PC-3 (cell line): ENCODE measurements at regions of chr10 and their contacts with region 1.

Region 1: DNA sequence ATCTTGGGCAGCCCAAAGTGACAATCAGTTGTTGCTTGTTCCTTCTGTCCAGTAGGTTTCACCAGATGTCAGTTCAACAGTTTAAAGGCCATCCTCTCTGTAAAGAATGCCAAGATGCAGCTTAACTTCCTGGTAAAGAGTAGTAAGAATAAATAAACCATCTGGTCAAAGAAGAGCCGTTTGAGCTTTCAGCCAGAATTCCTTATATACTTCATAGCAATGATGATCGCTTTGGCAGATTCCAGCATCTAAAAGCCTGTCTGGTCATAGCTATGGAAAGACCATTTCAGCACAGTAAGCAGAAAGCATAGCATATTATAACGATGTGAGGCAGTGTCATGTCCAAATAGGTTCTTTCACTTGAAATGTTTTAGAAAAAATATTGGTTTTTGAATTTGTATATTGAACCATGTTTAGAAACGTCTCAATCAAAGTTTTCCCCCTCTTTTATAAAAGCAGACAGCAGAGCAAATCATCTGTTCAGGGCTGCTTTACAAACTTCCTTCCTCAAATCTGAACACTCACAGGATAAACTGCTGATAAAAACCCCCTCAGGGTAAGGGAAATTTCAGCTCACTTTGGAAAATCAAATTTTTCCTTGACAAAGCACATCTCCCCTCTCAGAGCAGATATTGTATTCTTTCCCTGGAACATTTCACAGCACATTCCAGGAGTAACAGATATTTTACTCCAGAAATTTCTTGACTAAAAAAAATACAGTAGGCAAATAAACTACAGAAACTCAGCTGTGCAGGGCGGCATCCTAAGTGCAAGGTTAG is 184.1 kb downstream of the NOC3L start:
- DNase-seq: no peak
- ATAC-seq: no peak
- H3K4me3 ChIP-seq: no peak overlapping the region
- H3K27ac ChIP-seq: no peak overlapping the region
- H3K4me1 ChIP-seq: peaks cover 11% of the 10 kb centered on the region
- H3K27me3 ChIP-seq: no peaks in the 10 kb centered on the region
- CTCF ChIP-seq: no peak

Region 2: DNA sequence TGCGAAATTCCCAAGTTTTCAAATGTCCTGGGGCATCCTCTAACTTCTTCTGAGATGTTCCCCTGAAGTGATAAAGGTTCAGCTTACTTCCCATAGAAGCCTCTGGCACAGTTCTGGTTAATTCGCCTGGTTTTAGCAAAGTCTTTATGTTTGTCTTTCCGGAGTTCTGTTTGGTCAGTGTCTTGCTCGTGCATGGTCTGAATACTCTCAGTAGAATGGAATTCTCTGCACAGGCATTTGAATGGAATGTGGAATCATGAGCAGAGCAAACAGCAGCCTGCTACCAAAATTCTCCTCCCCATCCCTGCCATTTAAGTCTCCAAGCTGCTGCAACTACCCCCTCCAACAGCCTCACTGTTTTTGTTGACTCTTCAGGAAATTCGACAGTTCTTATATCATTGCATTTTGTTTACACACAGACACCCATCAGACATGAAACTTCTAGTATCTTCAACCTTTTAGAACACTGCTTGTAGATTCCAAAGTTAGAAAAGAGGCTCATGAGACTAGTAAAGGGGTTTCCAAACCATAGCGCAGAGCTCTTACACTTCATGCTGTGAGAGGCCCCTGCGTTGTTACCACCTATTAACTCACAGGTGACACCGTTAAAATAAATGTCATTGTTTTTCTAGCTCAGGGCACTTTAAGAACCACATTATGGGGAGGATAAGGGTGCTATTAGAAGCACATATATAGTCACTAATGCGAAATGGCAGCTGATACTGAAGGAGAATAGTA is 55.2 kb before region 1 on chr10:
- CTCF ChIA-PET with region 1: no interaction called
- POLR2A ChIA-PET with region 1: no interaction called
- intact Hi-C with region 1: loop called (anchors 10 kb)
- DNase-seq: peak; percentile 90
- ATAC-seq: peak; percentile 94
- H3K4me3 ChIP-seq: peak overlapping the region; percentile 39; the same call in 1 of the 2 replicates
- H3K27ac ChIP-seq: peak overlapping the region; percentile 66
- H3K4me1 ChIP-seq: peaks cover 54% of the 10 kb centered on the region
- H3K27me3 ChIP-seq: no peaks in the 10 kb centered on the region
- CTCF ChIP-seq: no peak

Region 3: GRCh38 chr10:94225589-94225988 is 46.9 kb after region 1 on chr10:
- CTCF ChIA-PET with region 1: no interaction called
- POLR2A ChIA-PET with region 1: no interaction called
- intact Hi-C with region 1: no loop called
- DNase-seq: peak; percentile 3
- ATAC-seq: no peak
- H3K4me3 ChIP-seq: no peak overlapping the region
- H3K27ac ChIP-seq: no peak overlapping the region
- H3K4me1 ChIP-seq: peaks cover 14% of the 10 kb centered on the region; the same call in 1 of the 2 replicates
- H3K27me3 ChIP-seq: no peaks in the 10 kb centered on the region
- CTCF ChIP-seq: peak; percentile 43